HAP-1 (cell line): ENCODE measurements at regions of chr9 and their contacts with region 1.

Region 1: GRCh38 chr9:107472581-107473340 is 16.8 kb downstream of the KLF4 start:
- DNase-seq: peak; percentile 74 to 98
- H3K4me3 ChIP-seq: no peak overlapping the region
- H3K4me1 ChIP-seq: peaks cover 14% of the 10 kb centered on the region
- H3K27me3 ChIP-seq: no peaks in the 10 kb centered on the region

Region 2: DNA sequence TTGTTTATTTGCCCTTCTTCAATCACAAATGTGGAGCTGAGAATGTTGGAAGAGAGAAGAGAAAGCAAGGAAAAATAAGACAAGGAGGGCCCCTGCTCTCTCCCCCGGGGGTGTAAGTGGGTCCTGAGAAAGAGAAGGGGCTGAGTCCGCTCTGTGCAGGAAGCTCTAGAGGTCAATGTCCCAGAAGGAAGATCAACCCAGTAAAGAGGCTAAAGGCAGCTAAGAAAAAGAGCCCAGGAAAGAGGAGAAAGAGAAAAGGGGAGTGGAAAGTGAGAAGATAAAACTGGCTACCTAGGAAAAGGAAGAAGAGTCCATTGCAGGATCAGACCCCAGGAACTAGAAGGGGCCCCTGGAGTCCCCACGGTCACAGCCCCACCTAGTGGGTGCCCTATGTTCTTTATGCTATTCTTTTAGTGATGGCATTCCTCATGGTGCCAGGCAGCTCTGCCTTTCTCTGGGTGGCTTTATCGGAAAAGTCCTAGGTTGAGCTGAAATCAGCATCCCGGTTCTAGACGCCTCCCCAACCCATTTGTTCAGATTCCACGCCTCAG is 799.7 kb after region 1 on chr9:
- in situ Hi-C with region 1: loop called (anchors 10 kb)
- DNase-seq: peak; percentile 26 to 75
- H3K4me3 ChIP-seq: peak overlapping the region; percentile 22
- H3K4me1 ChIP-seq: peaks cover 16% of the 10 kb centered on the region
- H3K27me3 ChIP-seq: no peaks in the 10 kb centered on the region